MCF 10A (cell line): ENCODE measurements at regions of chr22 and their contacts with region 1.

Region 1: GRCh38 chr22:22687638-22688500 is 43.5 kb downstream of the GGTLC2 start:
- DNase-seq: peak; percentile 63
- H3K4me3 Mint-ChIP-seq: no peak overlapping the region
- H3K27ac Mint-ChIP-seq: no peak overlapping the region
- H3K4me1 Mint-ChIP-seq: peaks cover 11% of the 10 kb centered on the region
- H3K27me3 Mint-ChIP-seq: no peaks in the 10 kb centered on the region
- CTCF ChIP-seq: peak; percentile 71

Region 2: GRCh38 chr22:22593964-22594656 is 93.8 kb before region 1 on chr22:
- CTCF ChIA-PET with region 1: interaction called, 30 read pairs
- POLR2A ChIA-PET with region 1: no interaction called
- intact Hi-C with region 1: loop called (anchors 5 kb)
- DNase-seq: peak; percentile 53
- H3K4me3 Mint-ChIP-seq: no peak overlapping the region
- H3K27ac Mint-ChIP-seq: no peak overlapping the region
- H3K4me1 Mint-ChIP-seq: no peaks in the 10 kb centered on the region
- H3K27me3 Mint-ChIP-seq: peaks cover 61% of the 10 kb centered on the region
- CTCF ChIP-seq: peak; percentile 73

Region 3: DNA sequence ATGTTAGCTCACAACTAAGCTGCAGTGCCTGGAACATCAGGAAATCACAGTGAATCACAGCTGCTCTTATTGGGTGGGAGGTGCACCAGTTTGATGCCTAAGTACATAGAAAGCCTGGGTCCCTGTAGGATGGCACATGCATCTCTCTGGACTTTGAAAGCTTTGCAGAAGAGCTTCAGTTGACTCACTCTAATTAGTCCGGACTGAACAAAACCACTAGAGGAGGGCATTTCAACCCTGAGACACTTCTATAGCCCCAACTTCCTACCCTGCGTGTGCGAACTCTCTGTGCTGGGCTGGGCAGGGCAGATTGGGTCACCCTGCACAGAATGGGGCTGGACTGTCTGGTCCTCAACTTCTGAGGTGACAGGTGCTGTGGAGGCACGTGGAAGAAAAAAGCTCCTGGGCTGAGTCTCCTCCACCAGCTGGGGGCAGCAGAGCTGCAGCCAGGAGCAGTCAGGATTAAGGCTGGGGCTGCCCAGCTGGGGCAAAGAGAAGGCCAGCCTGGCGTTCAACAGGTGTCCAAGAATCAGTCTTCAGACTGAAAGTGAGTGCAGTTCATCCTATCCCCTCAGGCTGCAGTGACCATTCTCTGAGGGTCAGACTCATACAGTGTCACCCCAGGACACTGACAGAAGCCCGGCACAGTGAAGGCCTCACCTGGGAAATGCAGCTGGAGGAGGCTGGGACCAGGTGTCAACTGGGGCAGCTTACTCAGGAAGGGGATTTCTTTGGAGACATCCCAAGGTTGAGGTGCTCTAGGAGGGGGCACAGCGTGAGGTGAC is 21.4 kb before region 1 on chr22:
- CTCF ChIA-PET with region 1: interaction called, 17 read pairs
- POLR2A ChIA-PET with region 1: no interaction called
- intact Hi-C with region 1: no loop called
- DNase-seq: peak; percentile 52
- H3K4me3 Mint-ChIP-seq: no peak overlapping the region
- H3K27ac Mint-ChIP-seq: no peak overlapping the region
- H3K4me1 Mint-ChIP-seq: no peaks in the 10 kb centered on the region
- H3K27me3 Mint-ChIP-seq: peaks cover 4% of the 10 kb centered on the region
- CTCF ChIP-seq: peak; percentile 66

Region 4: GRCh38 chr22:22702237-22703202 is 14.7 kb after region 1 on chr22:
- CTCF ChIA-PET with region 1: interaction called, 68 read pairs
- POLR2A ChIA-PET with region 1: interaction called, 5 read pairs
- intact Hi-C with region 1: no loop called
- DNase-seq: peak; percentile 53
- H3K4me3 Mint-ChIP-seq: no peak overlapping the region
- H3K27ac Mint-ChIP-seq: no peak overlapping the region
- H3K4me1 Mint-ChIP-seq: peaks cover 16% of the 10 kb centered on the region
- H3K27me3 Mint-ChIP-seq: no peaks in the 10 kb centered on the region
- CTCF ChIP-seq: peak; percentile 43

Region 5: GRCh38 chr22:22710719-22711531 is 23.1 kb after region 1 on chr22:
- CTCF ChIA-PET with region 1: interaction called, 68 read pairs
- POLR2A ChIA-PET with region 1: interaction called, 3 read pairs
- intact Hi-C with region 1: no loop called
- DNase-seq: peak; percentile 60
- H3K4me3 Mint-ChIP-seq: no peak overlapping the region
- H3K27ac Mint-ChIP-seq: no peak overlapping the region
- H3K4me1 Mint-ChIP-seq: no peaks in the 10 kb centered on the region
- H3K27me3 Mint-ChIP-seq: no peaks in the 10 kb centered on the region
- CTCF ChIP-seq: peak; percentile 95

Region 6: DNA sequence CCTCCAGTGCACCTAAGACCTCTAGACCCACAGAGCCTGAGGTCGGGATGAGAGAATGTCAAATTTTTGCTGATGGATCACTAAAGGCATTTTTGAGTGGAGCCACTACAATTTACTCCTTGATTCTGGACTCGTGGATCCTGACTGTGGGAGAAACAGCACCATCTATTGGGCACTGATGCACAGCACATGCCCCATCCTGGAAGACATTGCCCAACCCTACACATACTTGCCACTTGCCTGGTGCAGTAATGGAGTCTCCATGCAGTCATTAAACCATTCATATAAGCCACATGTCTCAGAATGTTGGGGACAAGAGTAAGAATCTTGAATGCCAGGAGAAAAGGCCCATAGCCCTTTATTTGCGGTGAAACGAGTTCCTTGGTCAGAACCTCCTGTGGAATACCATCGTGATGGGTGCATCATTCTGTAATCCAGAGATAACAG is 60.5 kb after region 1 on chr22:
- CTCF ChIA-PET with region 1: interaction called, 21 read pairs
- POLR2A ChIA-PET with region 1: no interaction called
- intact Hi-C with region 1: loop called (anchors 1 kb)
- DNase-seq: peak; percentile 71
- H3K4me3 Mint-ChIP-seq: no peak overlapping the region
- H3K27ac Mint-ChIP-seq: no peak overlapping the region
- H3K4me1 Mint-ChIP-seq: peaks cover 16% of the 10 kb centered on the region
- H3K27me3 Mint-ChIP-seq: peaks cover 11% of the 10 kb centered on the region
- CTCF ChIP-seq: peak; percentile 88

Region 7: GRCh38 chr22:22810018-22810427 is 122.2 kb after region 1 on chr22:
- CTCF ChIA-PET with region 1: no interaction called
- POLR2A ChIA-PET with region 1: no interaction called
- intact Hi-C with region 1: no loop called
- DNase-seq: peak; percentile 47
- H3K4me3 Mint-ChIP-seq: no peak overlapping the region
- H3K27ac Mint-ChIP-seq: no peak overlapping the region
- H3K4me1 Mint-ChIP-seq: no peaks in the 10 kb centered on the region
- H3K27me3 Mint-ChIP-seq: peaks cover 49% of the 10 kb centered on the region
- CTCF ChIP-seq: peak; percentile 49